GM12878 (cell line): ENCODE measurements at regions of chr9 and their contacts with region 1.

Region 1: GRCh38 chr9:85716031-85716877 is 25.5 kb downstream of the AGTPBP1 start:
- DNase-seq: peak; percentile 48
- ATAC-seq: peak; percentile 87
- H3K4me3 ChIP-seq: peak overlapping the region; percentile 37; the same call in 1 of the 2 replicates
- H3K27ac ChIP-seq: peak overlapping the region; percentile 49; the same call in 1 of the 2 replicates
- H3K4me1 ChIP-seq: peaks cover 16% of the 10 kb centered on the region
- H3K27me3 ChIP-seq: no peaks in the 10 kb centered on the region
- CTCF ChIP-seq: peak; percentile 29 to 47 (median 46); a peak in 5 of 6 replicates
- EP300 ChIP-seq: peak in 1 of 2 experiments; percentile 19; a peak in 1 of 4 replicates
- POLR2A ChIP-seq: no peak
- RAD21 ChIP-seq: 0 out of 2 replicates have a peak, but pooled peaks have one; percentile 28

Region 2: DNA sequence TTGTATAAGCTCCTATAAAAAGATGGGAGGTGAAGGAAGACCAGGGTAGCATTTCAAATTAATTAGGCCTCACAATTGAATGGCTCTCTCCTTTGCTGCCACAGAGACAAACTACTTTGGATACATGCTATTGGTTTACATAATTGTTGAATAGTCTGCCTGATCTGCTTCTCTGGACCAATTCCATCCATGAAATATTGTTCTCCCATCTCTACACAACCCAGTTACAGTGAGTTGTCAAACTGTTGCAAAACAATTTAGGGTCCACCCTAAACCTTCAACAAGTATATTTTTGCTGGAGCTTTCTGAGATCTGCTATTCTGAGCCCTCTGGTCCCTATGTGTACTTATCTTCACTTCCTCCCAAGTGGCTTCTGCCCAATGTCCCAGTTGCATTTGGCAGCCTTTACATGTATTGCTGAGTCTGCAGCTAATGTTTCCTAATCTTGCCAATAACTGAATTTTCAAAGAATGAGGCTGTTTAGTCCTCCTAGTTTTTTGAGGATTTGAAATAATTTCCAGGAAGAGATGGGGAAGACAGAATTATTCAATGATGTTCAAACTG is 13.4 kb before region 1 on chr9:
- CTCF ChIA-PET with region 1: interaction called, 50 read pairs
- POLR2A ChIA-PET with region 1: no interaction called
- RAD21 ChIA-PET with region 1: interaction called, 10 read pairs
- SMC1A ChIA-PET with region 1: interaction called, 15 read pairs
- in situ Hi-C with region 1: no loop called
- intact Hi-C with region 1: no loop called
- DNase-seq: no peak
- ATAC-seq: no peak
- H3K4me3 ChIP-seq: no peak overlapping the region
- H3K27ac ChIP-seq: no peak overlapping the region
- H3K4me1 ChIP-seq: no peaks in the 10 kb centered on the region
- H3K27me3 ChIP-seq: no peaks in the 10 kb centered on the region
- CTCF ChIP-seq: no peak
- EP300 ChIP-seq: no peak
- POLR2A ChIP-seq: no peak
- RAD21 ChIP-seq: no peak